Activated CD4-positive, alpha-beta T cell treated with anti-CD3 and anti-CD28 coated beads for 36 hours (primary cell): ENCODE measurements at regions of chr3 and their contacts with region 1.

Region 1: DNA sequence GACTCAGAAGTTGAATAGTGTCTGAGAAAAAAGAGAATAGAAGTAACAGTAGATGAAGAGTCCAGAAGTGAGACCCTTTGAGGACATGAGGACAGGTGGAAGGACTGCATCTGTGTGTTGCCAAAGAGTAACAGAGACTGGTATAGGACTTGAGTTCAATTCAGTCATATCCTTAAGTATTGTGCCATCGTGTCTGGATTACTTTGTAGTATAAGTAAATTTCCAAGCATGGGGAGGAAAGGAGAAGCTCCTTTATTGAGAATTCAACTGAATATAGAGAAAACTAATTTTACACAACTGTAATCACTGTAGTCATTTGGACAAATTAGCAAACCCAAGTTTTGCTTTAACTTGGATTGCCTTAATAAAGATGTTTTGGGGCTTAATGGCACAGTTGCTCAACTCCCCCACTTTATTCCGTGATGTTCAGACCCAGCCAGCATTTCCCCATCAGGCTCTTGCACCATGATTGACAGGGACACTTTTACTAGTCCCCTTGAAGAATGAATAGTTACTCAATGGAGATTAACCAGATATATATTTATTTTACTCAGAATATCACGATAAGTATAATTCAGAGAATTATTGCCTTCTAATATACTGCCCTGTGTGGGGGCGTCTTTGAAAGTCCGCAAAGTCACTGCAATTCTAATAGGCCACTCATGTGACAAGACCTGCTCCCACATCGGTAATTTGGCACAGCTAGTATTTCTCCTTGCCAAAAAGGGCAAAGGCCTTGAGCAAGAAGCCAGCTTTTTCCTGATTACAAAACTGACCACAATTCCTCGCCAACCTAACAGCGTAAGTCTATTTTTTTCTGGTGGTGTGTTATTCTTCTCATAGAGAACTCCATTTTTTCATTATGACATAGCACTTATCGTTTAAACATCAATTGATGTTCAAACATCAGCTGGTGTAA is 61.3 kb downstream of the PPARG start:
- DNase-seq: no peak
- ATAC-seq: no peak
- H3K4me3 Mint-ChIP-seq: no peak overlapping the region
- H3K27ac Mint-ChIP-seq: no peak overlapping the region
- H3K4me1 Mint-ChIP-seq: peaks cover 11% of the 10 kb centered on the region
- H3K27me3 Mint-ChIP-seq: peaks cover 17% of the 10 kb centered on the region

Region 2: DNA sequence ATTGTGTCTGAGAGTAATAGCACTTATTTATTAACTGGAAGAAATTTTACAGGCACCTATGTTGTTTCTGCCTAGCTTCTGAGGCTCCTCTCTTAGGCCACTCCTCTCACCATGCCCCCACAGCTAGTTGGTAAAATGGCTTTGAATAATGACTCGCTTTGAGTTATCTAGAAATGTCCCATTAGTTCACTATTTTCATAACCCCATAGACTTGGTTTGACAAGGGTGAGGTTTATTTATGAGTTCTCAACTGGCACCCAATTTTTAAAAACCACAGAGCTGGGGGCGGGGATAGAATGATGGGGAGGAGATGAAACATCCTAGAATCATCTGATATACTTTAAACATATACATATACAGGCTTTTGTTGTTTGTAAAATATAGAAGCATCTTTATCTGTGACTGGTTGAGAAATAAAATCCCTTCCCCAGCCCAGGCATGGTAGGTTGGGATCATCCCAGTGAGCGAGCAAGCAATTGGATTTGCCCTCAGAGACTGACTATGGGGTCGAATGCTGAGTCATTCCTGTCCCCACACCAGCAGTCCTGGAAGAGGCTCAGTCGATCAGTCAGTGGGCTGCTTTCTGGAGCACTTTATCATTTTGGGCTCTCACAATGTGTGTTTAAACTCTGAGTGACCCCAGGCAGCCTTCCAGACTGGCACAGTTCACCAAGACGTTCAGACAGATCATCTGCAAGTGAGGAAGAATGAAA is 73.9 kb after region 1 on chr3:
- CTCF ChIA-PET with region 1: no interaction called
- POLR2A ChIA-PET with region 1: no interaction called
- intact Hi-C with region 1: loop called in 1 of 2 experiments (anchors 5 kb)
- DNase-seq: peak; percentile 58
- ATAC-seq: peak; percentile 81
- H3K4me3 Mint-ChIP-seq: no peak overlapping the region
- H3K27ac Mint-ChIP-seq: peak overlapping the region; percentile 17
- H3K4me1 Mint-ChIP-seq: peaks cover 21% of the 10 kb centered on the region
- H3K27me3 Mint-ChIP-seq: no peaks in the 10 kb centered on the region

Region 3: DNA sequence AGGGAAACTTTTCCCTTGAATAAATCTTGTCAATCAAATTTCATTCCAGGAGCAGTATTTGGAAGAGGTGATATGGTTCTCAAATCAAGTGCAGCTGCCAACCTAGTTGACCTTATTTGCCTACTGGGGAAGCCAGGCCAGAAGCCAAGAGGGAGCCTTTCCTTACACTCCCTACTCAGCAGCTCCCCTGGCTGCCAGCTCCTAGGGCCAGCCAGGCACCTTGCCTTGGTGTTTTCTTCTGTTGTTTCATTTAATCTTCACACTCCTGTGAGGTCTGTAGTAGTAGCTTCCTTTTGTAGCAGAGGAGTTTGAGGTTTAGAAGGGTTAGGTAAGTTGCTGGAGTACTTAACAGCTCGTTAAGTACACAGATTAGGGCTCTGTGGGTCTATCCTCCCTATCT is 172.6 kb after region 1 on chr3:
- CTCF ChIA-PET with region 1: no interaction called
- POLR2A ChIA-PET with region 1: no interaction called
- intact Hi-C with region 1: no loop called
- DNase-seq: no peak
- ATAC-seq: no peak
- H3K4me3 Mint-ChIP-seq: no peak overlapping the region
- H3K27ac Mint-ChIP-seq: no peak overlapping the region
- H3K4me1 Mint-ChIP-seq: no peaks in the 10 kb centered on the region
- H3K27me3 Mint-ChIP-seq: no peaks in the 10 kb centered on the region